A549 (cell line): ENCODE measurements at regions of chr1 and their contacts with region 1.

Region 1: DNA sequence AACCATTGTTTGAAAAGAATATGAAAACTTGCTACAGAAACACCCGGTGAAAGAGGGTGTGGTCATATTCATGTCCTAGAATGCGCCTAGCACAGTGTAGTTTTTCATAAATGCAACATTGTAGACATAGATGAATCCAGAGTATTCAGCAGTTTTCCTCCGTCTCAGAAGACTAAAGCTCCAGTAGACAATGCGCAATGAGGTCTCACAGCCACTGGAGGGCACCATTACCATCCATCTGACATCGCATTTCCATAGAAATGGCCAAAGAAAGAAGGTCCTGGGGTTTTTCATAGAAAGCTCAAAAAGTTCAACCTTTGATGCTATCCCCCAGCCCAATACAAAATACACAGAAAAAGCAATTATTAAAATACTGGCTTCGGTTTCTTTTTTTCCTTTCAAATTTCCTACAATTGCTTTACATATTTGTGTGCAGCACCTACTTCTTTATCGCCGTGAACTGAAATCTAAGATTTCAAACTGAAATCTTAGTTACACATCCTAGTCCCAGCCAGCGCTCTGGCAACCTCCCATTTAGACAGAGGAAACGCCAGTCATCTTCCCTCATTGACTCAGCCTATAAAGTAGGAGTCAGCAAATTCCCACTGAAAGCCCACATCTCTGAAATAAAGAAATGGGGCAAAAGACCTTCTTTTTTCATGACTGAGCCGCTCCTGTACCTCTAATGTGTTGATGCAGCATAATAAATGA is 3.9 kb upstream of the CD58 start:
- DNase-seq: peak; percentile 52 to 65
- ATAC-seq: no peak
- H3K4me3 ChIP-seq: no peak overlapping the region
- H3K27ac ChIP-seq: no peak overlapping the region
- H3K4me1 ChIP-seq: peaks cover 10% of the 10 kb centered on the region
- CTCF ChIP-seq: peak; percentile 77
- EP300 ChIP-seq: no peak
- POLR2A ChIP-seq: no peak
- RAD21 ChIP-seq: peak; percentile 80

Region 2: GRCh38 chr1:116457946-116458604 is 116.7 kb before region 1 on chr1:
- CTCF ChIA-PET with region 1: no interaction called
- POLR2A ChIA-PET with region 1: no interaction called
- DNase-seq: no peak
- ATAC-seq: no peak
- H3K4me3 ChIP-seq: no peak overlapping the region
- H3K27ac ChIP-seq: no peak overlapping the region
- H3K4me1 ChIP-seq: no peaks in the 10 kb centered on the region
- CTCF ChIP-seq: no peak
- EP300 ChIP-seq: no peak
- POLR2A ChIP-seq: no peak
- RAD21 ChIP-seq: no peak

Region 3: DNA sequence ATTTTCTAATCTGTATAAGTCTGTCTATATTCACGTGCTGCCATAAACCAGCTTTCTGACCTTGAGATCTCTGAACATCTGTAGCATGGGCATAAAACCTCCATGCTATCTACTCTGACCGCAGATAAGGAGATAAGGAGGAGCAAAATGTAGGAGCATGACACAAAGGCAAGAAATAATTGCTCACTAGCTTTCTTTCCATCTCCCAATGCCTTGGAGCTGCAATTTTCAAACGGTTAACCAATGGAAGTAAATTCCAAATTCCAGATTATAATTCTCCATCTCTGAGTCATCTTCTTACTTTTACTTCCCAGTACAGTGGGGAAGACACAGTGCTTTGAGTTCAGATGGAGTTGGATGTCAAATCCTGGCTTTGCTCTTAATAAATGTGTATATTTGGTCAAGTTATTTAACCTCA is 45.5 kb before region 1 on chr1:
- CTCF ChIA-PET with region 1: no interaction called
- POLR2A ChIA-PET with region 1: no interaction called
- DNase-seq: no peak
- ATAC-seq: no peak
- H3K4me3 ChIP-seq: no peak overlapping the region
- H3K27ac ChIP-seq: no peak overlapping the region
- H3K4me1 ChIP-seq: no peaks in the 10 kb centered on the region
- CTCF ChIP-seq: no peak
- EP300 ChIP-seq: no peak
- POLR2A ChIP-seq: no peak
- RAD21 ChIP-seq: no peak

Region 4: DNA sequence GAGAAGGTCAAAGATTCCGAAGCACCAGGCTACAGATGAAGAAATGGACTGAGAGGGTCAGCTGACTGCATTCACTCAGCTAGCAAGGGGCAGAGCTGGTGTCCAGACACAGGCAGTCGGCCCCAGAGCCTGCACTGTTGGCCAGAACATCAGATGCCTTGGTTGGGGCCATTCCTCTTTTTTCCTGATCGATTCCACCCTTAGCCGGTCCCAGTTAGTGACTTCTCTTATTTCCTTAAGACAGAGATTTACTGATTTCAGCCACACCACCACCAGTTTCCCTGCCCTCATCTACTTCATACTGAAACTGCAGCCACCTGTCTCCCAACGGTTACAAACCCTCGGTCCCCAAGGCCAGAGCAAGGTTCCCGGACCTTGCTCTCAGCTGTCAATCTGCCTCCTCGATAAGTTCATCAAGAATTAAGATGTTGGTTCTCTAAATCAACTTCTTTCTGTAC is 15.4 kb before region 1 on chr1:
- CTCF ChIA-PET with region 1: no interaction called
- POLR2A ChIA-PET with region 1: no interaction called
- DNase-seq: no peak
- ATAC-seq: no peak
- H3K4me3 ChIP-seq: no peak overlapping the region
- H3K27ac ChIP-seq: no peak overlapping the region
- H3K4me1 ChIP-seq: peaks cover 18% of the 10 kb centered on the region; the same call in 2 of the 3 replicates
- CTCF ChIP-seq: no peak
- EP300 ChIP-seq: no peak
- POLR2A ChIP-seq: no peak
- RAD21 ChIP-seq: no peak

Region 5: DNA sequence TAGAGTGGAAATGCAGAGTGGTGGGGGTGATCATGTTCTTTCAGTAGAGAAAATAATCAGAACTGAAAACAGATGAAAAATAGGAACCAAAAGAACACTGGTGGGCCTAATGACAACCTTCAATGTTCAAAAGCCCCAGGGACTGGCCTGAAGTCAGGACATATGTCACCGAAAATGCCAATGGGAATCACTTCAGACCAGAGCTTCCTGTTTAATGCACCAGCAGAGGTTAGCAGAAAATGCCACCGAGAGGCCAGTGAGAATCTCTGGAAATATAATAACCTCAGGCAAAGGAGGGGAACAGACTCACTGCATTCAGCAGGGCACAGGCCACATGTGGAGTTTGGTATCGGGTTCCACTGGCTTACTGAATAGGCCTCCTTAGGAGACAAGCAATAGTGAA is 12.0 kb after region 1 on chr1:
- CTCF ChIA-PET with region 1: interaction called, 30 read pairs
- POLR2A ChIA-PET with region 1: no interaction called
- DNase-seq: no peak
- ATAC-seq: no peak
- H3K4me3 ChIP-seq: no peak overlapping the region
- H3K27ac ChIP-seq: no peak overlapping the region
- H3K4me1 ChIP-seq: peaks cover 14% of the 10 kb centered on the region
- CTCF ChIP-seq: no peak
- EP300 ChIP-seq: no peak
- POLR2A ChIP-seq: no peak
- RAD21 ChIP-seq: no peak

Region 6: DNA sequence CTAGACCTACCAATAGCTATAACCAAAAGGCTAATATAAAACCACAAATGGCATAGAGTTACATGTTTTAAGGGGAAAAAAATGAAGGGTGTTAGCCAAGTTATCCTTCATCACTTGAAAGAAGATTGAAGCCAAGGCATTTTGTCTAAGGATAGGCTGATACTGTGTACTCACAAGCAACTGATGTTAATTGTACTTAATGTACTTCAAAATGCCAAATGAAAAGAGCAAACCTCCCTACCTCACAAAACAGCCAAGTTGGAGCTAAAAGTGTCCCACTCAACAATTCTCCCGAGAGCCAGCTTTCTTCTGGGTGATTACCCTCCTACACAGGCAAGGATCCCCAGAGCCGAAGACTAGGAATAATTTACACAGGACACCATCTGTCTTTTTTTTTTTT is 97.2 kb after region 1 on chr1:
- CTCF ChIA-PET with region 1: interaction called, 18 read pairs
- POLR2A ChIA-PET with region 1: no interaction called
- DNase-seq: no peak
- ATAC-seq: no peak
- H3K4me3 ChIP-seq: no peak overlapping the region
- H3K27ac ChIP-seq: no peak overlapping the region
- H3K4me1 ChIP-seq: no peaks in the 10 kb centered on the region
- CTCF ChIP-seq: no peak
- EP300 ChIP-seq: no peak
- POLR2A ChIP-seq: no peak
- RAD21 ChIP-seq: no peak

Region 7: DNA sequence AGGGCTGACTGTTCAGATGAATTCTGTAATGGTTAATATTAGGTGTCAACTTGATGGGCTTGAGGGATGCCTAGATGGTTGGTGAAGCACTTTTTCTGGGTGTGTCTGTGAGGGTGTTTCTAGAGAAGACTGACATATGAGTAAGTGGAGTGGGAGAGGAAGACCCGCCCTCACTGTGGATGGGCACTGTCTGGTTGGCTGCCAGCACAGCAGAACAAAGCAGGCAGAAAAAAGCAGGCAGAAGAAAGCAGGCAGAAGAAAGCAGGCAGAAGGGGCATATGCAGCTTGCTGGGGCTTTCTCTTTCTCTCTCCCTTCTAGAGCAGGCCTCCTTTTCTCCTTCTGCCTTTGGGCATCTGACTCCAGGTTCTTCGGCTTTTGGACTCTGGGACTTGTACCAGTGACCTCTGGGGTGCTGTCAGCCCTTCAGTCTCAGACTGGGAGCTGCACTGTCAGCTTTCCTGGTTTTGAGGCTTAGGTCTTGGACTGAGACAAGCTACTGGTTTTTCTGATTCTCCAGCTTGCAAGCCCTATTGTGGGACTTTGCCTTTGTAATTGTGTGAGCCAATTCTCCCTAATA is 136.6 kb after region 1 on chr1:
- CTCF ChIA-PET with region 1: no interaction called
- POLR2A ChIA-PET with region 1: no interaction called
- DNase-seq: no peak
- ATAC-seq: peak in 1 of 2 experiments; percentile 64; a peak in 3 of 6 replicates
- H3K4me3 ChIP-seq: no peak overlapping the region
- H3K27ac ChIP-seq: 0 out of 6 replicates have a peak overlapping the region, but pooled peaks of 1 of the 2 experiments have one; percentile 21
- H3K4me1 ChIP-seq: peaks cover 12% of the 10 kb centered on the region; the same call in 2 of the 3 replicates
- CTCF ChIP-seq: no peak
- EP300 ChIP-seq: no peak
- POLR2A ChIP-seq: no peak
- RAD21 ChIP-seq: no peak